Left ventricle myocardium superior (tissue), 1 donor: ENCODE measurements at regions of chr6 and their contacts with region 1.

Region 1: DNA sequence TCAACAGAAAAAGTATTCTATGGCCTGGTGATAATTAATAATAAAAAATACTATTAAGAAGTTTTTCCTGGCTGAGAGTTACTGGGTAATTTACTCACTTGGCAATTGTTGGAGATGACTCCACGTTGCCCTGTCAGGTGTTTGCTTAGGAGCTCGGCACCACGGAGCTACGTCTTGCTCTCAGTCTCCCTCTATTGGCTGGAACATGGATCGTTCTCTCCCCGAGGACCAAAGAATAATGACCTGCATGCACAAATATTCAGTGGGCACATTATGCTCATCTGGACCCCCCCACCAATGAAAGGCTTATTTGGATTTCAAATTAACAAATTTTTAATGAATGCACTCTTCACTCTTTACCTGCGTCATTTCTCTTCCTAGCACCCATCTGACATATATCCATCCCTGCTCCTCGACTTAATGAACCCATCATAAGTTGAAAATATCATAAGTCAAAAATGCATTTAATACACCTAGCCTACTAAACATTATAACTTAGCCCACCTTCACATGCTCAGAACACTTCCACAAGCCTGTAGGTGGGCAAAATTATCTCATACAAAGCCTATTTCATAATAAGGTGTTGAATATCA is 71.0 kb upstream of the CD83 start:
- DNase-seq: no peak
- ATAC-seq: peak; percentile 51

Region 2: GRCh38 chr6:13916230-13916944 is 130.2 kb before region 1 on chr6:
- intact Hi-C with region 1: loop called (anchors 10 kb)
- DNase-seq: no peak
- ATAC-seq: no peak

Region 3: DNA sequence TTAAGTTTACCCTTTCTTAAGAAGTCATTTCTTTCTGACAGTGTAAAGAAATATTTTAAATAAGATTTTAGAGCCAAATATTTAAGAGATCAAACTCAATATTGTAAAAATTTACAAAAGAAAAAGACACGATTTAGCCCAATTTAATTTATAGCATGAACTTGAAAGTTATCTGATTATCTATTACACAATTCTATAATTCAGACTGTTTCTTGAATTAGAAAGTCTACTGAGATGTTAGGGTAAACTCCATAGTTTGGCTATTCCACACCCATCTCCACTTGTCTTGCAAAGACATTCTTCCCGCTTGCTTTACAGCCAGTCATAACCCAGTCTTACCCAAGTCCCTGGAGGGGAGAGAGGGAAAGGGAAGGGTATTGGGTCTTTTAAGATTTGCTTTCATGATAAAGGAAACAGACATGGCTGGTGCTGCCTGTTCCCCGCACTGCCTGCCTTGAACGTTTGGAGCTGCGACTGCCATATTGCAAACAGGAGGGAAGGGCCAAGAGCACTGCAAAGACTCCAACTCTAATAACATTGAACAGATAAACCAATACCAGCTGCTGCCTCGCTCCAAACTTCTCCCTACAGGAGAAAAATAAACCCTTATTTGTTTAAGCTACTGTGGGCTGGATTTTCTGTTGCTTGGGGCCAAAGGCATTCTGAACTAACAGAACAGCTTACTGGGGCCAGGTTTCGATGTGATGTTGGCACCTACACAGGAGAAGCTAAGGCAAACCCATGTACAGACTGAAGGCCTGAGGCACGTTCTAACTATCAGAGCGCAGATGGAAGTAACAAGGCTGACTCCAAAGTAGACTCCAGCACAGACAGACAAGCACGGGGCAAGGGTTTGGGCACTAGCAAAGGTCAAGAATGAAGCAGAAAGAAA is 647.0 kb after region 1 on chr6:
- intact Hi-C with region 1: no loop called
- DNase-seq: no peak
- ATAC-seq: no peak